ENCODE measurements at regions of chr11 and their contacts with region 1.

Region 1: DNA sequence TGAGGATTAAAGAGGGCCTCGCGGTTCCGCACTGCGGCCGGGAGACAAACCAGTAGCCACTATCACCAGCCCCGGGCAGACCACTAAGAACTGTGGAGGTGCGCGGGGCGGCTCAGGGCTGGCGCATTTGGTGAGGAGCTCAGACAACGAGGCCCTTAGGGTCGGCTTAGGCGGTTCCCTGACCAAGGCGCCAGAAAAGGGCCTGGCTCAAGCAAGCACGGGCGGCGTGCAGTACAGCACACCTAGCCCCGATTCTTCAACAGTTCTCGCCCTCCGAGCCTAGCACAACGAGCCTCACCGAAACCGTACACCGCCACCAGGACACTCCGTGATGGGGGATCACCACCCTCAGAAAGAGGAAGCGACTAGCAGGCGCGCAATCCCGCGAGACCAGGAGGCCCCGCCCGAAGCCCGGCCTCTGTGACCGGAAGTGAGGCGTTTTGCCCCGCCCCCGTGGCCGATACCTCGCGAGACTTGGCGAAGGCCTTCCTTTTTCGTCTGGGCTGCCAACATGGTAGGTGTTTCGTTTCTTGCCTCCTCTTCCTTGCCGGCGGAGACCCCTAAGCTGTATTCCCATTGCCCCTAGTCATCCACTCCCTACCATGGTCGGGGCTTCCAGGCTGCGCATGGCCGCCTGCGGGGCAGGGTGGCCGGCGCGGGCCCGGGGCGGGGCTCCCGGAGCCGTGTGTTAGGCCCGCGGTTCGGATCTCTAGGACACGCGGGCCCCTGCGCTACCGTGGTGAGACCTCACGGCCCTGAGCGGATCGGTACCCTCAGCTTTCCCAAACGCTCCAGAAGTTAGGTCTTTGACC is at the starts of genes RPL27A and TRIM66:
- DNase-seq: peak; percentile 82 to 100
- H3K4me3 ChIP-seq: peak within 1 kb of the TSS; percentile 87 to 98 (median 97)
- H3K27ac ChIP-seq: peak within 1 kb of the TSS; percentile 96
- H3K4me1 ChIP-seq: peaks cover 0 to 8% (median 2%) of the 10 kb centered on the region in 4 experiments; a peak in 4 of 7 replicates
- H3K27me3 ChIP-seq: no peaks in the 10 kb centered on the region
- CTCF ChIP-seq: peak in 1 of 3 experiments; percentile 3; a peak in 1 of 4 replicates
- EP300 ChIP-seq: no peak
- POLR2A ChIP-seq: peak; percentile 99 to 100
- RAD21 ChIP-seq: 0 out of 4 replicates have a peak, but pooled peaks of 1 of the 2 experiments have one; percentile 7
- total RNA-seq, gene RPL27A: 1,756 and 1,761 TPM in 2 replicates
- total RNA-seq, gene TRIM66: 3.0 and 3.1 TPM in 2 replicates

Region 2: GRCh38 chr11:8593935-8594909 is 88.3 kb before region 1 on chr11 and contains the start of gene STK33:
- CTCF ChIA-PET with region 1: interaction called, 3 read pairs
- POLR2A ChIA-PET with region 1: interaction called, 24 read pairs
- DNase-seq: peak; percentile 27 to 88
- H3K4me3 ChIP-seq: peak within 1 kb of the TSS; percentile 71 to 89 (median 84)
- H3K27ac ChIP-seq: peak within 1 kb of the TSS; percentile 67
- H3K4me1 ChIP-seq: peaks cover 0 to 10% (median 4%) of the 10 kb centered on the region in 4 experiments; a peak in 4 of 7 replicates
- H3K27me3 ChIP-seq: no peaks in the 10 kb centered on the region
- CTCF ChIP-seq: no peak
- EP300 ChIP-seq: no peak
- POLR2A ChIP-seq: peak; percentile 54
- RAD21 ChIP-seq: no peak; a peak in 2 of 4 replicates
- total RNA-seq, gene STK33: 16.0 and 25.1 TPM in 2 replicates

Region 3: DNA sequence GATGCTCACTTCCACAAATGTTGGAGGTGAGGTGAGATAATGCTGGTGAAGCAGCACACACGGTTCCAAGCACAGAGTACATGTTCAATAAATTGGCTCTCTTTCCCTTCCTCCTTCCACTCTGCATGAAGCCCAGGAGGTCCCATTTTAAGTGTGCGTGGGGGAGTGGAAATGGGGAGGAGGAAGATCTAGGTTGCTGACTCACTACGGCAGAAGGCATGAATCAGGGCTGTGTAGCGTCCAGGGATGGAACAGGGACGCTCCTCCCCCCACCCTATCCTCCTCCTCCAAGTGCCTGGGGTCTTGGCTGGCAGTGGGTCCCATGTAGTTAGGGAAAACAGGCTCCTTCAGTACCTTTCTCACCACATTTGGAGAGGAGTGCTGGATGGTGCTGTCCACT is 44.2 kb before region 1 on chr11:
- CTCF ChIA-PET with region 1: interaction called, 4 read pairs
- POLR2A ChIA-PET with region 1: interaction called, 41 read pairs
- DNase-seq: no peak
- H3K4me3 ChIP-seq: no peak overlapping the region
- H3K27ac ChIP-seq: no peak overlapping the region
- H3K4me1 ChIP-seq: peaks cover 4 to 9% (median 9%) of the 10 kb centered on the region in 4 experiments; a peak in 6 of 7 replicates
- H3K27me3 ChIP-seq: no peaks in the 10 kb centered on the region
- CTCF ChIP-seq: no peak
- EP300 ChIP-seq: no peak
- POLR2A ChIP-seq: no peak
- RAD21 ChIP-seq: no peak

Region 4: GRCh38 chr11:8665222-8665621 is 17.3 kb before region 1 on chr11:
- CTCF ChIA-PET with region 1: interaction called, 3 read pairs
- POLR2A ChIA-PET with region 1: interaction called, 143 read pairs
- DNase-seq: no peak
- H3K4me3 ChIP-seq: no peak overlapping the region
- H3K27ac ChIP-seq: no peak overlapping the region
- H3K4me1 ChIP-seq: no peaks in the 10 kb centered on the region; a peak in 1 of 7 replicates
- H3K27me3 ChIP-seq: no peaks in the 10 kb centered on the region
- CTCF ChIP-seq: no peak
- EP300 ChIP-seq: no peak
- POLR2A ChIP-seq: no peak
- RAD21 ChIP-seq: no peak

Region 5: GRCh38 chr11:8699903-8700302 is 17.4 kb after region 1 on chr11:
- CTCF ChIA-PET with region 1: no interaction called
- POLR2A ChIA-PET with region 1: interaction called, 248 read pairs
- DNase-seq: no peak
- H3K4me3 ChIP-seq: no peak overlapping the region
- H3K27ac ChIP-seq: peak overlapping the region; percentile 44; the same call in 1 of the 2 replicates
- H3K4me1 ChIP-seq: peaks cover 15 to 30% (median 20%) of the 10 kb centered on the region in 4 experiments; a peak in 6 of 7 replicates
- H3K27me3 ChIP-seq: no peaks in the 10 kb centered on the region
- CTCF ChIP-seq: no peak
- EP300 ChIP-seq: no peak
- POLR2A ChIP-seq: peak in 1 of 2 experiments; percentile 27; a peak in 2 of 3 replicates
- RAD21 ChIP-seq: no peak

Region 6: DNA sequence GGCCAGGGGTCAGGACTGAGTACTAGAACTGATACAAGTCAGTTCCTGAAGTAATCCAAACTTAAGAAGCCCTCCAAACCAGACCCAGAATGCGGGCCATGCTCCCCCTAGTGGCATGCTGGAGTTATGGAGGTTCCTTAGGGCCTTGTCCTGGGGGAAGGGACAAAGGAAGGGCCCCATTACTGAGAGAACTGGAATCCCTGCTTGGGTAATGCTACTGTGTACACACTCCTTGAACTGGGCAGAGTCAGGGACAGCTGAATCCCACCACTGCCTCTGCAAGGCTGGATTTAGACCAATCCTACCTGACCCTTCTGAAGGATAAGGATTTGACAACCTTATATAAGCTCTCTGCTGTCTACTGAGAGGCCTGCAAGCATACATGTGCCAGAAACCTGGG is 131.1 kb after region 1 on chr11:
- CTCF ChIA-PET with region 1: interaction called, 3 read pairs
- POLR2A ChIA-PET with region 1: interaction called, 23 read pairs
- DNase-seq: peak; percentile 77 to 88
- H3K4me3 ChIP-seq: no peak overlapping the region
- H3K27ac ChIP-seq: no peak overlapping the region
- H3K4me1 ChIP-seq: peaks cover 13 to 28% (median 22%) of the 10 kb centered on the region in 4 experiments; a peak in 6 of 7 replicates
- H3K27me3 ChIP-seq: no peaks in the 10 kb centered on the region
- CTCF ChIP-seq: peak; percentile 83 to 95 (median 90)
- EP300 ChIP-seq: no peak
- POLR2A ChIP-seq: no peak
- RAD21 ChIP-seq: peak; percentile 87 to 93

Measured in H1 (cell line).